ENCODE measurements at regions of chr10 and their contacts with region 1.

Region 1: DNA sequence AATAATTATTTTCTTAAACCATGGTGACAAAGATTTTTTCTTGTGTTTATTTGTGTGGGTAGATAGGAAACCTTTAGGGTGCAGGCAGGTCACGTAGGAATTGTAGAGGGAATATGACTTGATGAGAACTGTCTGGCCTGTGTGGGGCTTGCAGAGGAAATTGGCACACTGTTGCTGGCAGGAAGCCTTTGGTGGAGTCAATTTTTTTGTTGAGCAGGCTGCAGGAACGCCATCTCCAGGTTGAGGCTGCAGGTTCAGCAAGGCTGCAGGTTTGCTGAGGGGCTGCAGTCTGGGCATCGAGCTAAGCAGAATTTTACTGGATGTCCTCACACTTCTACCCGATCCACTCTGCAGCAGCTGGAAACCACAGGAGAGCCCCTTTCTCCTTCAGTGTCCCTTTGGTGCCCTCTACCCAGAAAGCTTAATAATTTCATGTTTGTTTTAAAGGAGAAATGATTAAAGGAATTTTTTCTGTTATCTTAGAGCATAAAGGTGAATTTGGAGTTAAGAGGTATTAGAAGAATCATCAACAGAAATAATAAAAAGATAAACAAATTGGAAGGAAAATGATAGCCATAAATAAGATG is 37.0 kb downstream of the TBC1D12 start:
- DNase-seq: peak in 1 of 2 experiments; percentile 15
- H3K4me3 ChIP-seq: no peak overlapping the region
- H3K4me3 Mint-ChIP-seq: no peak overlapping the region
- H3K27ac Mint-ChIP-seq: no peak overlapping the region
- H3K4me1 ChIP-seq: peaks cover 24% of the 10 kb centered on the region
- H3K4me1 Mint-ChIP-seq: no peaks in the 10 kb centered on the region
- H3K27me3 ChIP-seq: no peaks in the 10 kb centered on the region
- H3K27me3 Mint-ChIP-seq: no peaks in the 10 kb centered on the region
- CTCF ChIP-seq: no peak

Region 2: DNA sequence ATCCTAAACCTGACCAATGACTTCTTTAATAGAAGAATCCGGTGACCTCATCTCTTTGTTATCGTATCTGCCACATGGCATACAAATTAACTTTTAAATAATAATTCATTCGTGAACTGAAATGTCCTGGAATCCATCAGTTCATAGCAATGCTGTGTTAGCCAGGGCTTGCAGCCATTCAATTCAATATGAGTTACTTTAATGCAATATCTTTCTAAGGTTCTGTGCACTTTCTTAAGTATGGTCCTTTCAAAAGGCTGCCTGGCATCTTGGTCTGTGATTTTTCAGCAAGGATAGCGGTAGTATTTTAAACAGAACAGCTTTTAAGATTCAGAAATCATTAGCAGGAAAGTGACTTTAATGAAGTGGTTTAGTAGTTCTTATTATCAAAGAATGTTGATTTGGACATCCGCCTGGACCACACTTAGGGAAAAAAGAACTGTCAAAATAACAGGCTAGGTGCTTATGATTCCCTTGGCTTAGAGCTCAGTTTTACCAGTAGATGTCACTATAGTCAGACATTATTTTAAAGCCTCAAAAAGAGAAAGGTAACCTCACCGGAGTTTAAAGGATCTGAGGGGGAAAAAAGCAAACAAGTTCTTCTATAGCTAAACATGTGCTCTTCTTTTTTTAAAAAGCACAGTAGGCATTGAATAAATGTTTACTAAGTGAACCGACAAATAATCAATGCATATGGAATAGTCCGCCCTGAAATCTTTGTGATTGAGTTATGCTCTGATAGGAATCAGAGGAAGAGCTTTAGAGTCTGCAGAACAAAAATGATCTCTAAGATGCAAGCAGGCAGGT is 522.9 kb before region 1 on chr10:
- CTCF ChIA-PET with region 1: interaction called, 14 read pairs
- POLR2A ChIA-PET with region 1: no interaction called
- intact Hi-C with region 1: loop called (anchors 2 kb)
- DNase-seq: peak in 1 of 2 experiments; percentile 34
- H3K4me3 ChIP-seq: no peak overlapping the region
- H3K4me3 Mint-ChIP-seq: peak overlapping the region; percentile 31
- H3K27ac Mint-ChIP-seq: no peak overlapping the region
- H3K4me1 ChIP-seq: peaks cover 40% of the 10 kb centered on the region
- H3K4me1 Mint-ChIP-seq: peaks cover 35% of the 10 kb centered on the region
- H3K27me3 ChIP-seq: no peaks in the 10 kb centered on the region
- H3K27me3 Mint-ChIP-seq: no peaks in the 10 kb centered on the region
- CTCF ChIP-seq: peak; percentile 49 to 76

Region 3: GRCh38 chr10:94279835-94280709 is 159.3 kb before region 1 on chr10:
- CTCF ChIA-PET with region 1: interaction called, 3 read pairs
- POLR2A ChIA-PET with region 1: no interaction called
- intact Hi-C with region 1: loop called (anchors 1 kb)
- DNase-seq: peak; percentile 56 to 79
- H3K4me3 ChIP-seq: no peak overlapping the region
- H3K4me3 Mint-ChIP-seq: no peak overlapping the region
- H3K27ac Mint-ChIP-seq: no peak overlapping the region
- H3K4me1 ChIP-seq: no peaks in the 10 kb centered on the region
- H3K4me1 Mint-ChIP-seq: peaks cover 9% of the 10 kb centered on the region
- H3K27me3 ChIP-seq: no peaks in the 10 kb centered on the region
- H3K27me3 Mint-ChIP-seq: no peaks in the 10 kb centered on the region
- CTCF ChIP-seq: peak; percentile 93 to 95

Region 4: DNA sequence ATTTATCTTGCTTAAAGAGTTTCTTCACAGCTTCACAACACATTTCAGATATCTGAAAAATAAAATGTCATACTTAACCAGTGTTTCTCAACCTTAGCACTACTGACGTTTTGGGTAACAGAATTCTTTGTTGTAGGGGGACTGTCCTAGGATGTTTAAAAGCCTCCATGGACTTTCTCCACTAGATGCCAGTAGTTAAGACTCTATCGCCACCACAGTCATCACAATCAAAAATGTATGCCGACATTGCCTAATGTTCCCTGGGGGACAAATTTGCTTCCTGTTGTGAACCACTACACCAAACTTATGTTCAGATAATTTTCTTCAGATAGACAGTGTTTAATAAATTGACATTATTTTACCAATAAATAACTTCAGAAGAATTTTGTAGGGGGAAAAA is 90.0 kb before region 1 on chr10:
- CTCF ChIA-PET with region 1: interaction called, 12 read pairs
- POLR2A ChIA-PET with region 1: no interaction called
- intact Hi-C with region 1: no loop called
- DNase-seq: peak in 1 of 2 experiments; percentile 8
- H3K4me3 ChIP-seq: no peak overlapping the region
- H3K4me3 Mint-ChIP-seq: no peak overlapping the region
- H3K27ac Mint-ChIP-seq: no peak overlapping the region
- H3K4me1 ChIP-seq: no peaks in the 10 kb centered on the region
- H3K4me1 Mint-ChIP-seq: no peaks in the 10 kb centered on the region
- H3K27me3 ChIP-seq: no peaks in the 10 kb centered on the region
- H3K27me3 Mint-ChIP-seq: no peaks in the 10 kb centered on the region
- CTCF ChIP-seq: no peak

Region 5: GRCh38 chr10:94383530-94383929 is 55.8 kb before region 1 on chr10:
- CTCF ChIA-PET with region 1: interaction called, 18 read pairs
- POLR2A ChIA-PET with region 1: no interaction called
- intact Hi-C with region 1: no loop called
- DNase-seq: no peak
- H3K4me3 ChIP-seq: no peak overlapping the region
- H3K4me3 Mint-ChIP-seq: peak overlapping the region; percentile 29
- H3K27ac Mint-ChIP-seq: peak overlapping the region; percentile 88
- H3K4me1 ChIP-seq: peaks cover 61% of the 10 kb centered on the region
- H3K4me1 Mint-ChIP-seq: peaks cover 62% of the 10 kb centered on the region
- H3K27me3 ChIP-seq: no peaks in the 10 kb centered on the region
- H3K27me3 Mint-ChIP-seq: no peaks in the 10 kb centered on the region
- CTCF ChIP-seq: no peak

Region 6: DNA sequence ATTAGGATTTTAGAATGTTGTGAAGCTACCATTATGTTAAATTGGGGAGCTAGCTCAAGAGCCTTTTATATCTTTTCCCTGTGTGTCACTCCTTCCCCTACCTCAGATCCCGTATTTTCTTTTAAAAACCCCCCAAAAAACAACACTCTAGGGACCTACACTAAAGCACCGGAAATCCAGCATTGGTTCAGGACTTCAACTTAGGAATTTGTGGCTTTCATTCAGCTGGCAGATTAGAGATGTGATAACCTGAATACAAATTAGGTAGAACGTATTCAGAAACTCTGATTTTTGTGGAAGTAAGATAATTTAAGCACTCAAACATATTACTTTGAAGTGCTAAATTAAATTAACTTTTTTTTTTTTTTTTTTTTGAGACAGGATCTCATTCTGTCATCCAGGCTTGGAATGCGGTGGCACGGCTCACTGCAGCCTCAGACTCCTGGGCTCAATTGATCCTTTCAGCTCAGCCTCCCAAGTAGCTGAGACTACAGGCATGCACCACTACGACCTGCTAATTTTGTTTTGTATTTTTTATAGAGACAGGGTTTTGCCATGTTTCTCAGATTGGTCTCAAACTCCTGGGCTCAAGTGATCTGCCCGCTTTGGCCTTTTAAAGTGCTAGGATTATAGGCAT is 30.2 kb before region 1 on chr10:
- CTCF ChIA-PET with region 1: interaction called, 15 read pairs
- POLR2A ChIA-PET with region 1: interaction called, 6 read pairs
- intact Hi-C with region 1: no loop called
- DNase-seq: no peak
- H3K4me3 ChIP-seq: no peak overlapping the region
- H3K4me3 Mint-ChIP-seq: no peak overlapping the region
- H3K27ac Mint-ChIP-seq: no peak overlapping the region
- H3K4me1 ChIP-seq: peaks cover 69% of the 10 kb centered on the region
- H3K4me1 Mint-ChIP-seq: peaks cover 35% of the 10 kb centered on the region
- H3K27me3 ChIP-seq: no peaks in the 10 kb centered on the region
- H3K27me3 Mint-ChIP-seq: no peaks in the 10 kb centered on the region
- CTCF ChIP-seq: no peak

Region 7: GRCh38 chr10:94489107-94489506 is 49.7 kb after region 1 on chr10:
- CTCF ChIA-PET with region 1: no interaction called
- POLR2A ChIA-PET with region 1: no interaction called
- intact Hi-C with region 1: no loop called
- DNase-seq: no peak
- H3K4me3 ChIP-seq: no peak overlapping the region
- H3K4me3 Mint-ChIP-seq: no peak overlapping the region
- H3K27ac Mint-ChIP-seq: no peak overlapping the region
- H3K4me1 ChIP-seq: 0 out of 2 replicates have a peak, but pooled peaks cover 4% of the 10 kb centered on the region
- H3K4me1 Mint-ChIP-seq: peaks cover 8% of the 10 kb centered on the region
- H3K27me3 ChIP-seq: no peaks in the 10 kb centered on the region
- H3K27me3 Mint-ChIP-seq: no peaks in the 10 kb centered on the region
- CTCF ChIP-seq: no peak

Measured in Caco-2 (cell line).